Activated naive CD8-positive, alpha-beta T cell treated with anti-CD3 and anti-CD28 coated beads, Interleukin-2, amount 10 ng/mL, durations not matched to agents 7 days and 5 days (primary cell): ENCODE measurements at regions of chr20 and their contacts with region 1.

Region 1: GRCh38 chr20:57622579-57623377 is 2.6 kb upstream of the ZBP1 start:
- DNase-seq: peak; percentile 85
- ATAC-seq: no peak
- H3K4me3 Mint-ChIP-seq: peak overlapping the region; percentile 34
- H3K27ac Mint-ChIP-seq: peak overlapping the region; percentile 65
- H3K4me1 Mint-ChIP-seq: peaks cover 50% of the 10 kb centered on the region
- H3K27me3 Mint-ChIP-seq: no peaks in the 10 kb centered on the region

Region 2: DNA sequence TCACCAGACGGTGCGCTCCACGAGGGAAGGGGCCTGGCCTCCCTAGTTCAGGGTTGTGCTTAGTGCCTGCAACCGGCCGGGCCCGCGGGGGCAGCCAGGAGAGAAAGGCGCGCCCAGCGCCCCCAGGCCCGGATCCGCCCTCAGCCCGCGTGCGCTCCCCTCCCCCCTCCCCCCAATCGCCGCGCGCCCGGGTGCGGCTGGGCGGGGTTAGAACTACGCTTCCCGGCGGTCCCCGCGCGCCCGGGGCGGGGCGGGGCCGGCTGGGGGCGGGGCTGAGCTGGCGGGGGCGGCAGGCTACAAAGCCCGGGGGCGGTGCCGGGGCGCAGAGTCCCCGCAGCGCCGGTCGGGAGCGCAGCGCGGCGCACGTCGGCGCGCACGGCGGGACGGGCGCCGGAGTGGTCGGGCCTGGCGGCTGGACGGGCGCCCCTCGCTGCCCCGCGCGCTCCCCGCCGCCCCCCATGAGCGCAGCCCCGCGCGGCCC is 231.7 kb before region 1 on chr20 and contains the start of gene RBM38:
- POLR2A ChIA-PET with region 1: interaction called, 17 read pairs
- DNase-seq: peak; percentile 86
- ATAC-seq: peak; percentile 47
- H3K4me3 Mint-ChIP-seq: peak within 1 kb of the TSS; percentile 89
- H3K27ac Mint-ChIP-seq: peak within 1 kb of the TSS; percentile 87
- H3K4me1 Mint-ChIP-seq: peaks cover 25% of the 10 kb centered on the region
- H3K27me3 Mint-ChIP-seq: no peaks in the 10 kb centered on the region
- total RNA-seq, gene RBM38: 60.9 to 62.8 TPM

Region 3: GRCh38 chr20:57596998-57597939 is 25.5 kb before region 1 on chr20:
- POLR2A ChIA-PET with region 1: interaction called, 12 read pairs
- DNase-seq: peak; percentile 90
- ATAC-seq: peak; percentile 86
- H3K4me3 Mint-ChIP-seq: no peak overlapping the region
- H3K27ac Mint-ChIP-seq: no peak overlapping the region
- H3K4me1 Mint-ChIP-seq: peaks cover 6% of the 10 kb centered on the region
- H3K27me3 Mint-ChIP-seq: peaks cover 20% of the 10 kb centered on the region

Region 4: GRCh38 chr20:57633945-57634491 is 11.2 kb after region 1 on chr20:
- POLR2A ChIA-PET with region 1: interaction called, 103 read pairs
- DNase-seq: no peak
- ATAC-seq: peak; percentile 67
- H3K4me3 Mint-ChIP-seq: peak overlapping the region; percentile 55
- H3K27ac Mint-ChIP-seq: peak overlapping the region; percentile 79
- H3K4me1 Mint-ChIP-seq: peaks cover 31% of the 10 kb centered on the region
- H3K27me3 Mint-ChIP-seq: peaks cover 48% of the 10 kb centered on the region